ENCODE measurements at regions of chr2 and their contacts with region 1.

Region 1: DNA sequence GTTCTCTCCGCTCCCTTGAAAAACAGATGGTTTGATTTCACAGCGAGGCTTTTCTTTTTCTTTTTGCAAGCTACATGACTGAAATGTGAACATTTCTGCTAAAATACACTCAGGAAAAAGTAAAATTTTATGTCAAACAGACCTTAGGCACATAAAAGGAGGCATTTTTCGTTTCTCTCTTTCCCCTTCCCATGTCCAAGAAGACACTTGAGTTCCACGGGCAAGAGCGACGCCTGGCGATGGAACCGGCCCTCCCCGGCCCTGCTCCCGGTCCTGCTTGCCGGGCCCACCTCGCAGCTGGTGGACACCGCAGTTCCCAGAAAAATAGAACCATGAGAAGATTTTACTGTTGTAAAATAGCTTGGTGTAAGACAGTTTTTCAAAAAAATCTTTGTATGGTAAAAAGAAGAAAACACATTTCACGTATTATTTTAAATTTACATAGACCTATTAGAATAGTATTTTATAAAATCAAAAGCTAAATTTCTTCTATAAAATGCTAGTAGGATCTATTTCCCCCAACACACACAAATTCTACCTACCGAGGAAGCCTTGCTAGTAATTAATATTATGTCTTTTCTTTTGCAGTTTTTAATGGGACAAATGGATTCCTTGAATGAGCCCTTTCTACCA is 2.3 kb upstream of the ALKAL2 start:
- DNase-seq: peak; percentile 70 to 73
- ATAC-seq: peak; percentile 73 to 92 (median 85)
- H3K4me3 ChIP-seq: peak overlapping the region; percentile 28 to 59 (median 54)
- H3K27ac ChIP-seq: no peak overlapping the region
- H3K4me1 ChIP-seq: peaks cover 5 to 44% (median 28%) of the 10 kb centered on the region in 9 donors
- H3K27me3 ChIP-seq: peaks cover 0 to 73% (median 52%) of the 10 kb centered on the region in 7 donors
- CTCF ChIP-seq: peak; percentile 33 to 84 (median 77)

Region 2: DNA sequence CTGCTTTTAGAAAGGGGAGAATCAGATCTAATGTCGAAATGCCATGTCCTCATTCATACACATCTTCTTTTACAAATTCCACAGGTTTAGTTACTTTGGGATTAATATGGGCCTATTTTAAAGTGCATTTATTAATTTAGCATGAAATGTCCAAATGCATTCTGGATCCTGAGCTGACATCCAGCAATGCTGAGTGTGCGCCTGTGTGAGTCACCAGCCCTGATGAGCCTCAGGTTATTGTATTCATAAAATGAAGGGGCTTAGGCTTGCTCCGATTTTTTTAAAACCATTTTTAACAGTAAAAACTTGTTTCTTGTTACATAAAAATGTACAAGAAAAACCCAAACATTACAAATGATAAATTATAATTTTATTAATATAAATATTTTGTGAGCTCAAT is 120.5 kb before region 1 on chr2:
- intact Hi-C with region 1: loop called in 5 of 10 experiments (anchors 1 to 5 kb)
- DNase-seq: no peak
- ATAC-seq: no peak
- H3K4me3 ChIP-seq: no peak overlapping the region
- H3K27ac ChIP-seq: no peak overlapping the region
- H3K4me1 ChIP-seq: no peaks in the 10 kb centered on the region
- H3K27me3 ChIP-seq: peaks cover 0 to 15% (median 4%) of the 10 kb centered on the region in 7 donors
- CTCF ChIP-seq: no peak

Region 3: GRCh38 chr2:175880-176800 is 114.1 kb before region 1 on chr2:
- intact Hi-C with region 1: loop called in 5 of 10 experiments (anchors 1 to 5 kb)
- DNase-seq: no peak
- ATAC-seq: no peak
- H3K4me3 ChIP-seq: no peak overlapping the region
- H3K27ac ChIP-seq: no peak overlapping the region
- H3K4me1 ChIP-seq: peaks cover 0 to 6% (median 0%) of the 10 kb centered on the region in 9 donors
- H3K27me3 ChIP-seq: peaks cover 0 to 28% (median 13%) of the 10 kb centered on the region in 7 donors
- CTCF ChIP-seq: no peak

Region 4: DNA sequence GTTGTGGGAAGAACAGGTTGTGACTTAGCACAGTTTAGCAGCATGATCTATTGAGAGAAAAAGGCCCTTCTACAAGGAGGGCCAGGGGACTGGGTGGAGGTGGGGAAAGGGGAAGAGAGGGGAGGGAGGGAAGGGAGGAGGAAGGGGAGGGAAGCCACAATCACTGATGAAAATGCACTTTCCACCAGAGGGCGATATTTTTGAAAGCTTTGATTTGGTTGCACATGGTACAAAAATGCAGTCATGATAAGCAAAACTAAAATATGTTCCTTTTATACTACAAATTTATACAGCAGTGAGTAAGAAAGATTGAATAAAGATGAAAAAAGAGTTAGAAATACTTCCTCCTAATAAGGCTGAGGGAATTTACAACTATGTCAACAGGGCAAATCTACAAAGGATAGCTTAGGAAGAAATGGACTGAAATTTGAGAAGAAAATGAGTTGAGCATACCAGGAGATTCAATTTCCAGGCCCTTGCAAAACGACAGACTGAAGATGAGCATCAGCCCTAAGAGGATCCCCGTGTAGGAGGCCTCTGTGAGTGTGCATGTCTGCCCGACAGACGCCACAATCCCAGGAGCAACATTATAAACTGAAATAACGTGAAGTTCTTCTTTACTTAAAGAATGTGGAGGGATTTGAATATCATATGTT is 43.6 kb before region 1 on chr2:
- intact Hi-C with region 1: loop called in 4 of 10 experiments (anchors 2 to 10 kb)
- DNase-seq: peak in 1 of 2 donors; percentile 29
- ATAC-seq: no peak
- H3K4me3 ChIP-seq: no peak overlapping the region
- H3K27ac ChIP-seq: no peak overlapping the region
- H3K4me1 ChIP-seq: no peaks in the 10 kb centered on the region
- H3K27me3 ChIP-seq: no peaks in the 10 kb centered on the region
- CTCF ChIP-seq: peak in 8 of 9 donors; percentile 13 to 70 (median 58)